Body of pancreas (tissue), 4 donors: ENCODE measurements at regions of chr4 and their contacts with region 1.

Region 1: GRCh38 chr4:165464813-165465381 is 86.1 kb downstream of the CPE start:
- DNase-seq: peak; percentile 16 to 40 (median 20)
- ATAC-seq: peak; percentile 78
- H3K4me3 ChIP-seq: no peak overlapping the region
- H3K27ac ChIP-seq: no peak overlapping the region
- H3K4me1 ChIP-seq: peaks cover 6% of the 10 kb centered on the region
- H3K27me3 ChIP-seq: no peaks in the 10 kb centered on the region
- CTCF ChIP-seq: peak; percentile 33 to 90 (median 82)
- POLR2A ChIP-seq: no peak

Region 2: DNA sequence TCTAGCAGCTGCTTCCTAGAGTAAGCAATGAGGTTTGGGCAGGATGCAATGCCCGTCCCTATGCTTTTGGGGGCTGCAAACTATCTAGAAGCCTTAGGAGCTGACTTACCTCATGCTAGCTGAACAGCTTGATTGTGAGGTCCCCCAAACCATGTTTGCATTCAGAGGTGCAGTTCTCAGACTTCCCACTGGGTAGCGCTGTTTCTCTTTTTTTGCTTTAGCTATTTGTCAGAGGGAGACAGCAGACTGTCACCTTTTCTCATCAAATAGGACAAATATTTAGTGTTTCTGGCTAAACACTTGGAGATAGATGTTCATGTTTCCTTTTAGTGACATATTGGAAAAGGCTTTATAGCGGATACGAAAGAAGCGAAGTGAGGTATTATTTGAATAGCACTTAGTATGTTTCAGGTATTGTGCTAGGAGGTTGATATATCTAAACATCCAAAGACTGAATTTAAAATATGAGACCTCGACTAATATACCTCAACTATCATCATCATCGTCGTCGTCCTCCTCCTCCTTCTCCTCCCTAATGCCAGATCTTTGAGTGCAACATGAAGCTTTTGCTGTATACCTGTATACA is 333.6 kb before region 1 on chr4:
- intact Hi-C with region 1: loop called (anchors 5 kb)
- DNase-seq: peak; percentile 54 to 74 (median 70)
- ATAC-seq: peak; percentile 42
- H3K4me3 ChIP-seq: no peak overlapping the region
- H3K27ac ChIP-seq: no peak overlapping the region
- H3K4me1 ChIP-seq: no peaks in the 10 kb centered on the region
- H3K27me3 ChIP-seq: no peaks in the 10 kb centered on the region
- CTCF ChIP-seq: peak; percentile 64 to 91 (median 86)
- POLR2A ChIP-seq: no peak

Region 3: GRCh38 chr4:165343353-165344191 is 121.3 kb before region 1 on chr4:
- intact Hi-C with region 1: no loop called
- DNase-seq: no peak
- ATAC-seq: peak; percentile 42
- H3K4me3 ChIP-seq: no peak overlapping the region
- H3K27ac ChIP-seq: no peak overlapping the region
- H3K4me1 ChIP-seq: peaks cover 6% of the 10 kb centered on the region
- H3K27me3 ChIP-seq: no peaks in the 10 kb centered on the region
- CTCF ChIP-seq: peak in 3 of 7 experiments; percentile 15 to 49 (median 25)
- POLR2A ChIP-seq: no peak